Activated CD4-positive, alpha-beta memory T cell treated with anti-CD3 and anti-CD28 coated beads, Interleukin-2, amount 10 ng/mL, durations not matched to agents 7 days and 5 days (primary cell): ENCODE measurements at regions of chr22 and their contacts with region 1.

Region 1: GRCh38 chr22:41688365-41689211 is at the start of gene SNU13:
- DNase-seq: peak; percentile 95
- H3K4me3 Mint-ChIP-seq: peak within 1 kb of the TSS; percentile 95
- H3K27ac Mint-ChIP-seq: peak within 1 kb of the TSS; percentile 92
- H3K4me1 Mint-ChIP-seq: peaks cover 40% of the 10 kb centered on the region
- H3K27me3 Mint-ChIP-seq: no peaks in the 10 kb centered on the region
- total RNA-seq, gene SNU13: 166 to 176 TPM

Region 2: DNA sequence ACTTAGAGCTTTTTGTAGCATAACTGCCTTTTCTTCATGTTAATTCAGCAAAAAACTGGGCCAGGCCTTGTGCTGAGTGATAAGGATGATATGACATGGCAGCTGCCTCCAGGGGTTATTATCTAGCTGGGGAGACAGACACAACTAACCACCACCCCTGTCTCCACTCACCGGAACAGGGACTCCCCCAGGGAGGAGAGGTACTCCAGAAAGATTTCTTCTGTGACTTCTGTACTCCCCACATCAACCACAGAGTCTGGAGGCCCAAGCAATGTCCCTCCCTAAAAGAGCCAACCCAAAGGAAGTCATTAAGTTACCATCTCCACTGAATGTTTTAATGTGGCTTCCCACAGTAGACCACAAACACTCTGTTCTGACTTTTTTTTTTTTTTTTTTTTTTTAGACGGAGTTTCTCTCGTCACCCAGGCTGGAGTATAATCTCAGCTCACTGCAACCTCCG is 84.7 kb before region 1 on chr22:
- CTCF ChIA-PET with region 1: no interaction called
- POLR2A ChIA-PET with region 1: interaction called, 10 read pairs
- DNase-seq: peak; percentile 77
- H3K4me3 Mint-ChIP-seq: peak overlapping the region; percentile 50
- H3K27ac Mint-ChIP-seq: peak overlapping the region; percentile 72
- H3K4me1 Mint-ChIP-seq: peaks cover 38% of the 10 kb centered on the region
- H3K27me3 Mint-ChIP-seq: peaks cover 4% of the 10 kb centered on the region

Region 3: GRCh38 chr22:41672775-41673509 is 15.6 kb before region 1 on chr22:
- CTCF ChIA-PET with region 1: no interaction called
- POLR2A ChIA-PET with region 1: interaction called, 76 read pairs
- DNase-seq: no peak
- H3K4me3 Mint-ChIP-seq: no peak overlapping the region
- H3K27ac Mint-ChIP-seq: no peak overlapping the region
- H3K4me1 Mint-ChIP-seq: peaks cover 21% of the 10 kb centered on the region
- H3K27me3 Mint-ChIP-seq: no peaks in the 10 kb centered on the region

Region 4: DNA sequence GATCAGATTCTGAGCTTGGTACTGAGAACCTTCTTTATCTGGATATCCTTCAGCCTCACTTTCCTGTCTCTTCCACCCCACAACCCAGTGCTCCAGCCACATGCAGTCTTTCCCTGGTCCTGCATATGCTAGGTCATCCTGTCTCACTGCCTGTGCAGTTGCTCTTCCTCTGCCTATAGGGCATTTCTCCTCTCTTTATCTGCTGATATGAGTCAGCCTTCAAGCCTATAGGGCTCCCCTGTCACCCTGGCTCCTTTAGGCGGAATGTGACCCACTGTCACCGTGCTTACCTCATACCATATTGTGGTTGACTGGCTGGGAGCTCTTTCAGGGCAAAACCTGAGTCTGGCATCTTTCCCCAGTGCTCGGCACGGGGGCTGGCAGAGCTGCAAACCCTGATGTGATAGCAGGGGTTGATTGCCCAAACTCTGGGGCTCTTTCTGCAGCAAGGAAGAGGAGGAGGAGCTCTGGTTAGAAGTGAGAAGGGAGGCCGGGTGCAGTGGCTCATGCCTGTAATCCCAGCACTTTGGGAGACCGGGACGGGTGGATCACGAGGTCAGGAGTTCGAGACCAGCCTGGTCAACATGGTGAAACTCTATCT is 37.0 kb after region 1 on chr22:
- CTCF ChIA-PET with region 1: no interaction called
- POLR2A ChIA-PET with region 1: no interaction called
- DNase-seq: no peak
- H3K4me3 Mint-ChIP-seq: no peak overlapping the region
- H3K27ac Mint-ChIP-seq: no peak overlapping the region
- H3K4me1 Mint-ChIP-seq: no peaks in the 10 kb centered on the region
- H3K27me3 Mint-ChIP-seq: peaks cover 5% of the 10 kb centered on the region